Cardiac septum (tissue), 1 donor: ENCODE measurements at regions of chr9 and their contacts with region 1.

Region 1: GRCh38 chr9:127187231-127187956 is 65.0 kb upstream of the ANGPTL2 start:
- DNase-seq: no peak

Region 2: GRCh38 chr9:127021664-127022363 is 165.6 kb before region 1 on chr9:
- intact Hi-C with region 1: loop called (anchors 5 kb)
- DNase-seq: peak; percentile 92

Region 3: DNA sequence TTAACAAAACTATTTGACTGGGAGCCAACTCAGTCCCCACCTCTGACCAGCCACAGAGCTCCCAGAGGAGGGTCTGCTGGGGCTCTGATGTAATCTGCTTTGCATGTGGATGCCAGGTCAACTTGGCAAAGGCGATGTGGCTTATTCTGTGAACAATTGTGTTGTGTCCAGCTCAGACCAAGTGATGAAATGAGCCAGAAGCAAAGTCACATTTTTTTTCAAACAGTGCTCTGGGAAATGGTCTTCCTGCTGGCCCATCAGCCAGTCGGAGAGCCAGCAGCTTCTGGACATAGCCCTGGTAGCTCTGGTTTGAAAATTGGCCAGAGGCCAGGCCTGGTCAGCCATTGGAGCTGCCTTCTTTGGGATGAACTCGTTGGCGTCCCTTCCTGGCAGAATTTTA is 151.4 kb before region 1 on chr9:
- intact Hi-C with region 1: loop called (anchors 5 kb)
- DNase-seq: peak; percentile 70

Region 4: DNA sequence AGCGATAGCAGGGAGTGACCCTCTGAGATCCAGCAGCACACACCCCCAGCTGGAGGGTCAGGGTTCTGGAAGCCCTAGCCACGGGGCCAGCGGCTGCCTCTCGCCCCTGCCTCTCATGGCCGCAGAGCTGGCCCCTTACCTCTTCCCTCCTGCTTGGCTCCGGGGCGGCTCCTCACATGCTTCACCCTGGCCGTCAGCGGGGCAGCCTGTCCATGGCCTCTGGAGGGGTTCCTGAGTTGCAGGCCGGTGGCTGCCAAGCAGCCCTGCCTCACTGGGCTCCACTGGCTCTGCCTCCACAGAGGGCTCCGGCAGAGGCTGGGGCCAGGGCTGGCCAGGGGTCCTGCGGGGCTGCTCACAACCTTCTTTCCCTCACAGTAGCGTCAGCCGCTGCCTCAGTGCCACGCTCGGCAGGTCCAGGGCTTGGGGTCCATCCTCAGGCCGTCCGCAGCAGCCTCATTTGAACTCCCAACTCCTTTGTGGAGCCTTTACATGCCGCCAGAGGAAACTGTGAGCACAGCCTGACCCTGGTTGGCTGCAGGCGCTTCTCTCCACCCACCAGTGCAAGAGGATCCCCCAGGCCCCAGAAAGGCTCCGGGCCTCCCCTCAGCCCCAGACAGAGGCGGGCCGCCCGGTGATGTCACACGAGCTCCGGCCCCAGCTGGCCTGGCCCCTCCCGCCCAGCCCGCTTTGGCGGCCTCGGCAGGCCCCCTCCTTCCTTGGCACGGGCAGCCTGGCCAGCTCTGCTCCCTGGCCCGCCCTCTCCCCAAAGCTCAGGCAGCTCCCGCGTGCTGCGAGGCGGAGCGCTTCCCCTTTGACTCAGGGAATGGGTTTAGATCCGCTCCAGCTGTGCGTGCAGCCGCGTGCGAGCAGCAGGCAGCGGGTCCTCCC is 65.0 kb before region 1 on chr9 and contains the start of gene ANGPTL2:
- intact Hi-C with region 1: loop called (anchors 2 kb)
- DNase-seq: peak; percentile 93
- total RNA-seq, gene ANGPTL2: 41.4 TPM

Region 5: GRCh38 chr9:127166651-127167524 is 20.5 kb before region 1 on chr9:
- intact Hi-C with region 1: loop called (anchors 2 kb)
- DNase-seq: no peak